ENCODE measurements at regions of chr13 and their contacts with region 1.

Region 1: DNA sequence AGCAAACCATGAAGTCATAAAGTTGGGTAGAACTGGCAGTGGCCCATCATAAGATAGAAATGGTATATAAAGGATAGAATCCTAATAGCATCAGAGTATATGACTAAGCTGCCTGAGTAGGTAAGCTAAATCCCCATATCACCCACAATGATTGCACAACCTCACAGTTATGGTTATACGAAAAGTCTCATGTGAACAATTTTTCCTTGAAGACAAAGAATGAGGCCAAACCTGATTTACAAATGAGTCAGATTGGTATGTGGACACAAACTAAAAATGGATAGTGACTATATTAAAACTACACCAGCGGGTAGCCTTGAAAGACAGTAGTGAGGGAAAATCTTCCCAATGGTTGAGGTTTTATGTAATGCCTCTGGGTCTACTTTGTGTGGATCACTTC is 40.9 kb upstream of the UFM1 start:
- DNase-seq: peak; percentile 24
- H3K4me3 Mint-ChIP-seq: no peak overlapping the region
- H3K27ac Mint-ChIP-seq: peak overlapping the region; percentile 16
- H3K4me1 Mint-ChIP-seq: peaks cover 10% of the 10 kb centered on the region
- H3K27me3 Mint-ChIP-seq: no peaks in the 10 kb centered on the region
- CTCF ChIP-seq: no peak

Region 2: DNA sequence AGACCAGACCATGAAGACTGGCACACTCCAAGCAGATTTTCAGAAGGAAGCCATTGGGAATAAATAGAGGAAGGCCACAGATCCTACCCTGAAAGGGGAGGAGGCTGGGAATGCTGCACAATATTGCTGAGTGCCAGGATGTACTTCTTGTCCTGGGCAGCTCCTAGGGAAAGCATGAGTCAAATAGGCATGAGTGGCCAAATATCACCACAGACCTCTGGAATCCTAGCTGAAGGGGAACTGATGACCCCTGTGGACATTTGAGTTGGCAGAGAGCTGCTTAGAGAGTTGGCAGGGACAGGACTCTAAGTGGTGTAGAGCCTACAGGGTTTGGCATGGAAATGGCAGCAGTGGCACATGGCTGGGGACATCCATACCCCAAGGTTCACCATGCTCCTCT is 204.9 kb before region 1 on chr13:
- CTCF ChIA-PET with region 1: no interaction called
- intact Hi-C with region 1: no loop called
- DNase-seq: no peak
- H3K4me3 Mint-ChIP-seq: no peak overlapping the region
- H3K27ac Mint-ChIP-seq: no peak overlapping the region
- H3K4me1 Mint-ChIP-seq: no peaks in the 10 kb centered on the region
- H3K27me3 Mint-ChIP-seq: no peaks in the 10 kb centered on the region
- CTCF ChIP-seq: no peak

Region 3: DNA sequence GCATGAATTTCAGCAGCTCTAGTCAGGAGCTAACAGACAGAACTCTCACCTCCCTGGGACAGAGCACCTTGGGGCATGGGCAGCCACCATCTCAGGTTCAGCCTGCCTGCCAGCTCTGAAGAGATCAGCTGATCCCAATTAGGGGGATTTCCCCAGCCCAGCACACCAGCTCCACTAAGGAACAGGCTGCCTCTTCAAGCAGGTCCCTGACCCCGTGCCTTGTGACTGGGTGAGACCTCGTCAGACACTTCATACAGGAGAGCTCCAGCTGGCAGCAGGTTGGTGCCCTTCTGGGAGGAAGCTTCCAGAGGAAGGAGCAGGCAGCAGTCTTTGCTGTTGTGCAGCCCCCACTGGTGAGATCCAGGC is 43.6 kb before region 1 on chr13:
- CTCF ChIA-PET with region 1: no interaction called
- intact Hi-C with region 1: loop called (anchors 5 kb)
- DNase-seq: no peak
- H3K4me3 Mint-ChIP-seq: no peak overlapping the region
- H3K27ac Mint-ChIP-seq: no peak overlapping the region
- H3K4me1 Mint-ChIP-seq: no peaks in the 10 kb centered on the region
- H3K27me3 Mint-ChIP-seq: no peaks in the 10 kb centered on the region
- CTCF ChIP-seq: no peak

Region 4: DNA sequence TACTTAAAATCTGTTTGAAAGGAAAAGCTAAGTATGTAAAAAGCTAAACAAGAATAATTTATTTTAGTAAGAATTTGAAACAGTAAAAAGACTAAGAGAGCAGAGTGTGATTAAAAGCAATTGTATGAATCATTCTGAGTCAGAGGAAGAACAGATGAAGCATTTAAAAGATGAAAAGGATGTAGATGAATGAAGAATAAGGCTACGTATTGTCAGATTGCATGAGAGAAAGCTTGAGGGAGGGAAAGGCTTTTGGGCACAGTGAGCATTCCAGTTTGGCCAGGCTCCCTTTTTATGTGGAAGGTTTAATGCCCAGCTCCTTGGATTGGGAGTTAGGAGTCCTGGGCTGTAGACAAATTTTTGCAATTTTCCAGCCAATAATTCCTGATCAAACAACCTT is 495.8 kb after region 1 on chr13:
- CTCF ChIA-PET with region 1: no interaction called
- intact Hi-C with region 1: no loop called
- DNase-seq: peak; percentile 3
- H3K4me3 Mint-ChIP-seq: no peak overlapping the region
- H3K27ac Mint-ChIP-seq: peak overlapping the region; percentile 8
- H3K4me1 Mint-ChIP-seq: peaks cover 20% of the 10 kb centered on the region
- H3K27me3 Mint-ChIP-seq: no peaks in the 10 kb centered on the region
- CTCF ChIP-seq: no peak